SK-N-SH (cell line): ENCODE measurements at regions of chr15 and their contacts with region 1.

Region 1: DNA sequence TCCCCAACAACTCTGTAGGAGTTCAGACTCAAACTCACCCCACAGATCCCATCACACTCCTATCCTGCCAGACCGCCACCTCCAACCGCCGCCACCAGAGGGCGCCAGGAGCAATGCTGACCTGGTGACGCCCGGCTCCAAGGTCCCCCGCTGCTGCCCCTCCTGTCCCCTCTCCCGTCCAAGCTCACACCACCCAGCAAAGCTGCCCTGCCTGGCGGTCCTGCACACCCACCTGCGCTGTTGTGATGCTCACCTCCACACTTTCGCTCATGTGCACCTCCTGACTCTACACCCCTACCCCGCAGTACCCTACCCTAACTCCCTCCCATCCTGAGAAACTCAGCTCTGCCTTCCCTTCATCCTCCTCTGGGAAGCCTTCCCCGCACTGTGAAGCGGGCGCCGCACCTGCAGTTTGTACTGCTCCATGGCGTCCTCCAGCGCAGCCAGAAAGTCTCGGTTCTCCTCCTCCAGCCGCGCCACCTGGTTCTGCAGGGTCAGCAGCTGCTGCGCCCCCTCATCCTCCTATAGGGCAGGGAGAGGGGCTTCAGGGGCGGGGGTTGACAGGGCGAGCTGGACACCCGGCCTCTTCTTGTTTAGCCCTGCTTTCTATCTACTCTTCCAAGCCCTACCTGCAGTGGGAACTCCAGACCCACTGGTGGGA is 7.9 kb downstream of the KIF7 start:
- DNase-seq: peak; percentile 94
- H3K4me3 ChIP-seq: no peak overlapping the region; a peak in 1 of 4 replicates
- H3K27ac ChIP-seq: no peak overlapping the region
- H3K4me1 ChIP-seq: peaks cover 0 to 2% of the 10 kb centered on the region in 2 experiments; a peak in 1 of 4 replicates
- H3K27me3 ChIP-seq: no peaks in the 10 kb centered on the region
- CTCF ChIP-seq: peak; percentile 89
- EP300 ChIP-seq: no peak
- RAD21 ChIP-seq: peak; percentile 64

Region 2: DNA sequence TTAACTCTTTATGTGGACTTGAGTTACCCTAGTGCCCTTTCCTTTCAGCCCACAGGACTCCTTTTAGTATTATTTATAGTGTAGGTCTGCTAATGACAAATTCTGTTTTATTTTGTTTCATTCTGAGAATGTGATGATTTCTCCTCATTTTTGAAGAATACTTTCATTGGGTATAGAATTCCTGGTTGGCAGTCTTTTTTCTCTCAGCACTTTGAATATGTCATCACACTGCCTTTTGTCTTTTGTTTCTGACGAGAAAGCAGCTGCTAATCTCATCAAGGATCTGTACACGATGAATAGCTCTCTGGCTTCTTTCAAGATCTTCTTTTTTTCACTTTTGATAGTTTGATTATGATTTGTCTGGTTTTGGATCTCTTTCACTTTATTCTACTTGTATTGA is 34.3 kb before region 1 on chr15:
- CTCF ChIA-PET with region 1: interaction called, 14 read pairs
- POLR2A ChIA-PET with region 1: no interaction called
- DNase-seq: no peak
- H3K4me3 ChIP-seq: no peak overlapping the region
- H3K27ac ChIP-seq: no peak overlapping the region
- H3K4me1 ChIP-seq: no peaks in the 10 kb centered on the region
- H3K27me3 ChIP-seq: no peaks in the 10 kb centered on the region
- CTCF ChIP-seq: no peak
- EP300 ChIP-seq: no peak
- RAD21 ChIP-seq: no peak

Region 3: GRCh38 chr15:89623165-89623564 is 24.2 kb before region 1 on chr15:
- CTCF ChIA-PET with region 1: interaction called, 27 read pairs
- POLR2A ChIA-PET with region 1: no interaction called
- DNase-seq: no peak
- H3K4me3 ChIP-seq: no peak overlapping the region
- H3K27ac ChIP-seq: peak overlapping the region in 1 of 2 experiments; percentile 13; a peak in 1 of 4 replicates
- H3K4me1 ChIP-seq: no peaks in the 10 kb centered on the region
- H3K27me3 ChIP-seq: no peaks in the 10 kb centered on the region
- CTCF ChIP-seq: no peak
- EP300 ChIP-seq: no peak
- RAD21 ChIP-seq: no peak

Region 4: GRCh38 chr15:89630974-89631901 is 16.1 kb before region 1 on chr15:
- CTCF ChIA-PET with region 1: interaction called, 27 read pairs
- POLR2A ChIA-PET with region 1: interaction called, 5 read pairs
- DNase-seq: peak; percentile 20
- H3K4me3 ChIP-seq: no peak overlapping the region
- H3K27ac ChIP-seq: no peak overlapping the region; a peak in 1 of 4 replicates
- H3K4me1 ChIP-seq: no peaks in the 10 kb centered on the region
- H3K27me3 ChIP-seq: no peaks in the 10 kb centered on the region
- CTCF ChIP-seq: no peak
- EP300 ChIP-seq: no peak
- RAD21 ChIP-seq: no peak

Region 5: GRCh38 chr15:89665449-89666181 is 18.3 kb after region 1 on chr15:
- CTCF ChIA-PET with region 1: interaction called, 36 read pairs
- POLR2A ChIA-PET with region 1: interaction called, 5 read pairs
- DNase-seq: peak; percentile 91
- H3K4me3 ChIP-seq: peak overlapping the region in 1 of 2 experiments; percentile 37; a peak in 2 of 4 replicates
- H3K27ac ChIP-seq: no peak overlapping the region; a peak in 1 of 4 replicates
- H3K4me1 ChIP-seq: peaks cover 12 to 19% of the 10 kb centered on the region in 2 experiments; a peak in 3 of 4 replicates
- H3K27me3 ChIP-seq: no peaks in the 10 kb centered on the region
- CTCF ChIP-seq: no peak
- EP300 ChIP-seq: no peak
- RAD21 ChIP-seq: no peak

Region 6: DNA sequence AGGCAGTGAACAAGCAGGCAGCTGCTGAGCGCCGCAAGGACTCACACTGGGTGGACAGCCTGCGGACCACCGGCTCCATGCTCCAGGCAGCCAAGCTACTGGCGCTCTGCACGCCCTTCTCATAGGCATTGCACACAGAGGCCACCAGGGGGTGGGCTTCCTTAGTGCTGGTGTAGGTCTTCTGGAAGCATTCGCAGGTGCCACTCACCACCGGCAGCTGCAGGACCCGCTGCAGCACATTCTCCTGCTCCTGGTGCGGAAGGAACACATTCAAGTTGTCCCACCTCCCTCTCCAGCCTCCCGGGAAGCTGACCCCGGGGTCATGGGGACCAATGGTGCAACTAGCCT is 25.8 kb after region 1 on chr15:
- CTCF ChIA-PET with region 1: interaction called, 36 read pairs
- POLR2A ChIA-PET with region 1: no interaction called
- DNase-seq: peak; percentile 81
- H3K4me3 ChIP-seq: no peak overlapping the region; a peak in 1 of 4 replicates
- H3K27ac ChIP-seq: peak overlapping the region in 1 of 2 experiments; percentile 75; a peak in 2 of 4 replicates
- H3K4me1 ChIP-seq: peaks cover 0 to 22% of the 10 kb centered on the region in 2 experiments; a peak in 1 of 4 replicates
- H3K27me3 ChIP-seq: no peaks in the 10 kb centered on the region
- CTCF ChIP-seq: peak; percentile 49
- EP300 ChIP-seq: no peak
- RAD21 ChIP-seq: 0 out of 2 replicates have a peak, but pooled peaks have one; percentile 20

Region 7: DNA sequence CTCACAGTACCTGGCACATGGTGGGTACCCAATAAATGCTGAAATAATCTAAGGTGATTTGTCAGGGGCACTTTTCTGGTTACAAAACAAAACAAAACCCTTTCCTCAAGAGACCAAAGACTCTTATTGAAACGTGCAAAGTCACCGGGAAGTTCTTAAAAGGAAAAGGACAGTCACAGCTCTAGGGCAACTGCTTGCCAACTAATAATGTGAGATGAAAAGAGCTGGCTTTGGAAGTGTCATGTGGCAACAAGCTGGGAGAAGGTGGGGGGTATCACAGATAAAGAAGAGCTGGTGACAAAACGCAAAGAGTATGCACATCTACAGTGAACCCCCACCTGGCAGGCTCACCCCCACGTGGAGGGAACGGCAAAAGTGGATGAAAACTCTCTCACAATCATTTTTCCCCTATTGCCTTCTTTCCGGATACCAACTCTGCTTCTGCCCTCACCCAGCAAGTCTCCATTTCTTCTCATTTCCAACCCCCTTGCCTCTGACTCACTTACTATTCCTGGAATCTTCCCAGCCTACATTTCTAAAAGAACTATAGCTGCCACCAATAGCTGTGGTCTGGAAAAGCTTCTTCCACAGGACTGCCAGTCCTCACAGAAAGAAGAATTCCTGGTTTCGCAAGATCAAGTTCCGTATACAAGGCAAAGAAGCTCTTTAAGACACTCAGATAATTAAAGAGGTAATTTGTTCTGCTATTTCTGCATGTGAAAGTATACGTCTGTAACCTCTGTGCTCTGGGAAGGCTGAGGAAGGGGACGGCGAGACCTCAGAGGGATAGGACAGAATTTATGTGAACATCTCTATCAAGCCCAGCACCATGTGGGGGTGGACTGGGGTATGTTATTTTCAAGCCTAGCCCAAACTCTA is 189.2 kb after region 1 on chr15:
- CTCF ChIA-PET with region 1: no interaction called
- POLR2A ChIA-PET with region 1: no interaction called
- DNase-seq: no peak
- H3K4me3 ChIP-seq: peak overlapping the region in 1 of 2 experiments; percentile 6; a peak in 1 of 4 replicates
- H3K27ac ChIP-seq: peak overlapping the region; percentile 87 to 95
- H3K4me1 ChIP-seq: peaks cover 0 to 21% of the 10 kb centered on the region in 2 experiments; a peak in 2 of 4 replicates
- H3K27me3 ChIP-seq: no peaks in the 10 kb centered on the region
- CTCF ChIP-seq: no peak
- EP300 ChIP-seq: 0 out of 4 replicates have a peak, but pooled peaks of 1 of the 2 experiments have one; percentile 44
- RAD21 ChIP-seq: no peak